Right ventricle myocardium inferior (tissue), 1 donor: ENCODE measurements at regions of chr11 and their contacts with region 1.

Region 1: DNA sequence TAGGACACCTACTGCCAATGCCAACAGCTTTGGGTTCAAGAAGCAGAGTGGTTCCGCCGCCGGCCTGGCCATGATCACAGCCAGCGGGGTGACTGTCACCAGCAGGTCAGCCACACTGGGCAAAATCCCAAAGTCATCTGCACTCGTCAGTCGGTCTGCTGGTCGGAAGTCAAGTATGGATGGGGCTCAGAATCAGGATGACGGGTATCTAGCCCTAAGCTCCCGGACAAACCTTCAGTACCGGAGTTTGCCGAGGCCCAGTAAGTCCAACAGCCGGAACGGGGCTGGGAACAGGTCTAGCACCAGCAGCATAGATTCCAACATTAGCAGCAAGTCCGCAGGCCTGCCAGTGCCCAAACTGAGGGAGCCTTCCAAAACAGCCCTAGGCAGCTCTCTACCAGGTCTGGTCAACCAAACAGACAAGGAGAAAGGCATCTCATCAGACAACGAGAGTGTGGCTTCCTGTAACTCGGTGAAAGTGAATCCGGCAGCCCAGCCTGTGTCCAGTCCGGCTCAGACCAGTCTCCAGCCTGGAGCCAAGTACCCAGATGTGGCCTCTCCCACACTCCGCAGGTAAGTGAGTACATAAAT is 115.1 kb downstream of the DBX1 start:
- DNase-seq: peak; percentile 65
- ATAC-seq: peak; percentile 56

Region 2: GRCh38 chr11:19679952-19680828 is 365.0 kb before region 1 on chr11:
- intact Hi-C with region 1: no loop called
- DNase-seq: peak; percentile 86
- ATAC-seq: peak; percentile 59

Region 3: GRCh38 chr11:19790831-19791552 is 254.2 kb before region 1 on chr11:
- intact Hi-C with region 1: no loop called
- DNase-seq: no peak
- ATAC-seq: no peak

Region 4: GRCh38 chr11:20008190-20008870 is 36.9 kb before region 1 on chr11:
- intact Hi-C with region 1: loop called (anchors 2 kb)
- DNase-seq: no peak
- ATAC-seq: no peak